Activated CD4-positive, alpha-beta memory T cell treated with anti-CD3 and anti-CD28 coated beads, Interleukin-2, amount 10 ng/mL, durations not matched to agents 7 days and 5 days (primary cell): ENCODE measurements at regions of chr1 and their contacts with region 1.

Region 1: GRCh38 chr1:206521143-206521542 is 13.8 kb downstream of the RASSF5 start:
- DNase-seq: no peak
- H3K4me3 Mint-ChIP-seq: no peak overlapping the region
- H3K27ac Mint-ChIP-seq: no peak overlapping the region
- H3K4me1 Mint-ChIP-seq: peaks cover 7% of the 10 kb centered on the region
- H3K27me3 Mint-ChIP-seq: no peaks in the 10 kb centered on the region

Region 2: GRCh38 chr1:206507284-206508129 is 13.6 kb before region 1 on chr1 and contains the start of gene RASSF5:
- CTCF ChIA-PET with region 1: no interaction called
- POLR2A ChIA-PET with region 1: interaction called, 12 read pairs
- DNase-seq: peak; percentile 87
- H3K4me3 Mint-ChIP-seq: peak within 1 kb of the TSS; percentile 67
- H3K27ac Mint-ChIP-seq: no peak within 1 kb of the TSS
- H3K4me1 Mint-ChIP-seq: peaks cover 50% of the 10 kb centered on the region
- H3K27me3 Mint-ChIP-seq: peaks cover 38% of the 10 kb centered on the region
- total RNA-seq, gene RASSF5: 213 to 216 TPM

Region 3: DNA sequence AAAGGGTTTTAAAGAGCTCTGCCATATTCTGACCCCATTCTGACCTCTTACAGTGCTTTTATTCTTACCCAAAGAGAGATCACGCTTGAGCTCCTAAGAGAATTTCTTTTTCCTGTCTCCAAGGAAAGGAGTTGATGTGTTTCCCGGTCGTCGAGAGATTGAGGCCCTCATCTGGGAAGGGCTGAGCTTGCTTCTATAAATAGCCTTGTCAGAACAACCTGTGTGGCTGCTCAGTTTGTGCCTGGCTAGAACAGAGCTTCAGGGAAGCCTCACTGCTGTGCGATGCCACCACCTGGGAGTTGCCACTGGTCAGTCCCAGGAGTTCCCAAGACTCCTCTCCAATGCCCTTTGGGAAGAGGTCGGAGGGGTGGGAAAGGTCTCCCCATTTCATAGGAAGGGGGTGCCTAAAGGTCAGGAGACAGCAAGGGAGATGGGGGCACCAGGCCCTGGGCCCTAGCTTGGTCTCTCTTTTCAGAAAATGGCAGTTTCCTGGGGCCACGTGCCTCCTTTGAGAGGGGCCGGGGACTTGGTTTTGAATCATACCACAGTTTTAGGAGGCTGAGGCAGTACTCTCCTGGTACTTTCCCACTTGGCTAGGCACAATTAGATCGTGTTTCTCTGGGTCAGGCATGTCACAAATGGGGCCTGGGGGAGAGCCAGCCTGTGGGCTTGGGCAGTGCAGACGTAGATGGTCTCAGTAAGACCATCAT is 39.0 kb after region 1 on chr1:
- CTCF ChIA-PET with region 1: no interaction called
- POLR2A ChIA-PET with region 1: no interaction called
- DNase-seq: no peak
- H3K4me3 Mint-ChIP-seq: peak overlapping the region; percentile 92
- H3K27ac Mint-ChIP-seq: peak overlapping the region; percentile 94
- H3K4me1 Mint-ChIP-seq: peaks cover 70% of the 10 kb centered on the region
- H3K27me3 Mint-ChIP-seq: no peaks in the 10 kb centered on the region

Region 4: DNA sequence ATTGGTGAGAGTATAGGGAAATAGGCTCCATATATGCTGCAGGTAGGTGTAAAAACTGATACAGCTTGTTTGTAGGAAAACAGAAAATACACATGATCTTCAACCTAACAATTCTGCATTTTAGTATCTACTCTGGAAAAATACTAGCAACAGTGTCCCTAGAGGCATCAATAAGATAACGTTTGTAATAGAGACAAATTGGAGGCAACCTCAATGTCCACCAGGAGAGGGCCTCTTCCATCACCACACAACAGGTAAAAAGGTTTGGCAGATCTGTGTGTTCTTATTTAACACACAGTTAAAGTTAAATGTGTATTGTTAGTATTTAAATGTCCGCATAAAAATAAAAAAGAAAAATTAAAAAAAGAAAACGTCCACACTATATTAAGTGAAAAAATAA is 85.7 kb after region 1 on chr1:
- CTCF ChIA-PET with region 1: no interaction called
- POLR2A ChIA-PET with region 1: no interaction called
- DNase-seq: no peak
- H3K4me3 Mint-ChIP-seq: no peak overlapping the region
- H3K27ac Mint-ChIP-seq: peak overlapping the region; percentile 32
- H3K4me1 Mint-ChIP-seq: peaks cover 39% of the 10 kb centered on the region
- H3K27me3 Mint-ChIP-seq: no peaks in the 10 kb centered on the region

Region 5: GRCh38 chr1:206706298-206706791 is 185.2 kb after region 1 on chr1:
- CTCF ChIA-PET with region 1: no interaction called
- POLR2A ChIA-PET with region 1: no interaction called
- DNase-seq: no peak
- H3K4me3 Mint-ChIP-seq: no peak overlapping the region
- H3K27ac Mint-ChIP-seq: no peak overlapping the region
- H3K4me1 Mint-ChIP-seq: peaks cover 79% of the 10 kb centered on the region
- H3K27me3 Mint-ChIP-seq: no peaks in the 10 kb centered on the region